ENCODE measurements at regions of chr5 and their contacts with region 1.

Region 1: DNA sequence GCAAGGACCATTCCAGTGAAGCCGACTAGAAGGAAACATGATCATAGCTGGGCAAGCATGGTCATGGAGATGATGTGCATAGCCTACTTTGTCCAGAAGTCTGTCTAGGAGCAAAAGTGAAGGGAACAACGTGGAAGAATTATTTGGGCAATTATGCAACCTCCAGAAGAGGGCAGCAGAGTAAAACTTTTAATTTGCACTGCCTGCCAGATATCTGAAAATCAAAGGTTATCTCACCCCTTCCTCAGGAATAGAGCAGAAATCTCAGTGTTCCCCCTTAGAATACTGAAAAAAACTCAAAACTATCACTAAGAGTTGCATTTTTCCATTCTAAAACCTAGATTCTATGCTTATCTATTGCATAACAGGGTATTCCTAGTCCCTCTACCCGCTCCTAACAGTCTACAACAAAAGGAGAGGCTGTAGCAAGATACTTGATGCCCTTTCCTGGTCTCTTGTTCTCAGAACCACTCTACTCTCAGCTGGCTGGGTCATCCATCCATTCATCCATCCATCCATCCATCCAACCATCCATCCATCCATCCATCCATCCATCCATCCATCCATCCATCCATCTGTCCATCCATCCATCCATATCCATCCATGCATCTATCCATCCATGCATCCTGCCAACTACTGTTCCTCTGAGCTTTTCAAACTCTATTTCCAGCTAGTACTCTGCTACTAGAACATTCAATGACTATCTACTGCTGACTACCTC is 8.4 kb upstream of the SETD9 start:
- DNase-seq: peak; percentile 40
- CTCF ChIP-seq: peak; percentile 66

Region 2: DNA sequence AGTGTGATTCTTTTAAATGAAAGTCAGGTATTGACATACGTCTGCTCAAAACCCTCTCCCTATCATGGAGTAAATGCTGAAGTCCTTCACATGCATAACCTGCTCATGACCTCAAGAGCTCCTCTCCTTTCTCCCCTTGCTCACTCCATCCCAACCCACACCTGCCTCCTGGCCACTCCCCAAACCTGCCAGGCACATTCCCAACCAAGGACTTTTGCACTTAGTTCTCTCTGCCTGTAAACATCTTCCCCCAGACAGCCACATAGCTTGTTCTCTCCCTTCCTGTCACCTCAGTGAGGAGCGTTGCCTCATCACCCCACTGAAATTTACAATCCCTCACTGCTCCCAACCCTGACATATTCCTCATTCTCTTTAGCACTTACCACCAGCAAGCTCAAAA is 17.0 kb after region 1 on chr5:
- CTCF ChIA-PET with region 1: interaction called, 14 read pairs
- POLR2A ChIA-PET with region 1: no interaction called
- DNase-seq: no peak
- CTCF ChIP-seq: no peak

Region 3: DNA sequence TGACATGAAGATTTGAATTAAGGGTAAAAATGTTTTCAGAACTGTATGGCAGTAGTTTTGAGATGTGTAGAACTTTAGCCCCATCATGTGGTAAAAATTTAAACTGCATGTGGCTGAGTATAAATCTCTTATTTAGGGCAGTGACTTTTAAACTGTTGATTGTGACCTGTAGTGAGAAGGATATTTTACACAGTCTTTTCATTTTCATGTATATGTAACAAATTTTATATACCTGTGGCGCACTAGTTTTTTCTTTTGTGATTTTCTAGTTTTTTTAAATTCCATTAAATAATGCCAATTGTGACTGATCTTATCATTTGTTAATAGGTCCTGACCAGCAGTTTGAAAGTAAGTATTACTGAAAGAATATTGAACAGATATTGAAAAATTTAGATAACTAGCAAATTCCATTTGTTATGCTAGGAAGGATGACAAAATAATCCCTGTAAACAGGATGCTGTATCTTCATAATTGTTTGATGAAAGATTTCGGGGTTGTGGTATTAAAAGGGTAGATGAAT is 320.1 kb after region 1 on chr5:
- CTCF ChIA-PET with region 1: interaction called, 24 read pairs
- POLR2A ChIA-PET with region 1: no interaction called
- DNase-seq: peak; percentile 40
- CTCF ChIP-seq: peak; percentile 66

Measured in GM10248 (cell line).